ENCODE measurements at regions of chr20 and their contacts with region 1.

Region 1: DNA sequence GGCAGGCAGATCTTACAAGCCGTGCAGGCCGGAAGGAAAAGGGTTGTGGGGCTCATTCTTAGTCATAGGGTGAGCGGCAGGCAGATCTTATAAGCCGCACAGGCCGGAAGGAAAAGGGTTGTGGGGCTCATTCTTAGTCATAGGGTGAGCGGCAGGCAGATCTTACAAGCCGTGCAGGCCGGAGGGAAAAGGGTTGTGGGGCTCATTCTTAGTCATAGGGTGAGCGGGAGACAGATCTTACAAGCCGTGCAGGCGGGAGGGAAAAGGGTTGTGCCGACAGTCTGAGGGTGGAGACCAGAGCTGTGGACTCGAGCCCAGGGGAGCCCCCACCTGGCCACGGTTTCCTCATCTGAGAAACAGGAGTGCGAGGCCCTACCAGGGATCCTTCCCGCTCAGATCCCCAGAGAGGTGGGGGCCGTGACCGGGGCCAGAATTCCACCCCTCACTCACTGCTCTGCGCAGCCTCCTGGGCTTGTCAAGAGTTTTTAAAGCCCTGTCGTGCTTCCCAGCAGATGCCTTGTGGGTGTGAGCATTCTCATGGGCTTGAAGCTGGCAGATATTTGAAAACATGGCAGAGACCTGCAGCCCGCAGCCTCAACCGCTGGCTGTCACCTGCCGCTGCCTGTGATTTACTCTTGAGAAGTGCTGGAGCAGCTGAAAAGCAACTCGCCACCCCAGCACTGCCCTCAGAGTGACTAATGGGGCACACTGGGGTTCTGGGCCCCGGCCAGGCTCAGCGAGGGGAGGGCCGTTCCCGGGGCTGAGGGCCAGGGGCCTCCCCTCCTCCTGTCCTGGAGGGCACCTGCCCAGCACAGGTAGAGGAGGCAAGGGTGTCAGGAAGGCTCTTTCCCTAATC is 31.9 kb downstream of the NTSR1 start:
- DNase-seq: peak; percentile 44 to 78 (median 68)
- ATAC-seq: peak; percentile 87
- H3K4me3 ChIP-seq: peak overlapping the region; percentile 70
- H3K4me3 Mint-ChIP-seq: peak overlapping the region; percentile 70 to 91 (median 82)
- H3K27ac ChIP-seq: peak overlapping the region; percentile 60
- H3K27ac Mint-ChIP-seq: peak overlapping the region; percentile 75 to 97 (median 86)
- H3K4me1 ChIP-seq: peaks cover 38 to 50% of the 10 kb centered on the region in 2 donors
- H3K4me1 Mint-ChIP-seq: peaks cover 16 to 43% (median 29%) of the 10 kb centered on the region in 7 donors
- H3K27me3 ChIP-seq: no peaks in the 10 kb centered on the region
- H3K27me3 Mint-ChIP-seq: peaks cover 0 to 21% (median 0%) of the 10 kb centered on the region in 5 donors

Region 2: DNA sequence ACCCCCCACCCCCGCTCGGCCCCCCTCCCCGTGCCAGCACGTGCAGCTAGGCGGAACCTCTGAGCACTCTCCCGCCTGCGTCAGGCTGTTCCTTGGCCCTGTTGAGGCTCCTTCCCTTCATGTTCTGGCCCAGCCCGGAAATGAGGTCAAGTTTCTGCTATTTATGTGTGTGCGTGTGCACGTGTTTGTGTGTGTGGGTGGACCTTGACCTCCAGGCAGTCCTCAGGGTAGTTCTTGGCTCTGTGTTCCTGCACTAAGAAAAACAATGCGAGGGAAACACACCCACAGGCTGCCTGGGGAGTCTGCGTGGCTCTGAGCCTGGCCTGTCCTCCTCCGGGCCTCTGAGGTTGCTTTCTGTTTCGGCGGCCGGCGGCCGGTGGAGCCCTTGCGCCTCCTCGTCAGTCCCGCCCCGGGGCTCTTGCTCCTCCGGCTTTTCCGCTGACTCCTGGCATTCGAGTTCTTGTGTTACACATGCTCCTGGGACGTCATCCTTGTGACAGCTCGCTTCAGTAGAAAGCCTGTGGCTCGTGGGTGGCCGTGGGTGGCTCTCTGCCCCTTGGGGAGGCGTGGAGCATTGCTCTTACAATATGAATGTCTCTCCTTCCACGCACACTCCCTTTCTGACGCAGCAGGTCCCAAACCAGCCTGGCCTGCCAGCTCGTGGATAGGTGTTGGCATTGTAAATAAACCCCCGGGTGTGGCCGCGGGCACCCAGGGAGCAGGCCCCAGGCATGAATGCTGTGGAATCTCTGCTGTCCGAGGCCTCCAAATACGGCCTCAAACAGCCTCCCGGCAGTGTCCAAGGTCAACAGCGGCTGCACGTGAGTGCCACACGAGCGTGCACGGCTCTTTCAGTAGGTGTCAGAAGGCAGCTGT is 88.2 kb before region 1 on chr20:
- CTCF ChIA-PET with region 1: no interaction called
- POLR2A ChIA-PET with region 1: interaction called, 7 read pairs
- intact Hi-C with region 1: loop called in 1 of 2 experiments (anchors 1 kb)
- DNase-seq: peak; percentile 44 to 80 (median 75)
- ATAC-seq: peak; percentile 78
- H3K4me3 ChIP-seq: peak overlapping the region; percentile 40
- H3K4me3 Mint-ChIP-seq: peak overlapping the region; percentile 80 to 95 (median 84)
- H3K27ac ChIP-seq: peak overlapping the region; percentile 81
- H3K27ac Mint-ChIP-seq: peak overlapping the region; percentile 93 to 99 (median 97)
- H3K4me1 ChIP-seq: peaks cover 17 to 20% of the 10 kb centered on the region in 2 donors
- H3K4me1 Mint-ChIP-seq: peaks cover 11 to 45% (median 30%) of the 10 kb centered on the region in 7 donors
- H3K27me3 ChIP-seq: no peaks in the 10 kb centered on the region
- H3K27me3 Mint-ChIP-seq: no peaks in the 10 kb centered on the region

Region 3: DNA sequence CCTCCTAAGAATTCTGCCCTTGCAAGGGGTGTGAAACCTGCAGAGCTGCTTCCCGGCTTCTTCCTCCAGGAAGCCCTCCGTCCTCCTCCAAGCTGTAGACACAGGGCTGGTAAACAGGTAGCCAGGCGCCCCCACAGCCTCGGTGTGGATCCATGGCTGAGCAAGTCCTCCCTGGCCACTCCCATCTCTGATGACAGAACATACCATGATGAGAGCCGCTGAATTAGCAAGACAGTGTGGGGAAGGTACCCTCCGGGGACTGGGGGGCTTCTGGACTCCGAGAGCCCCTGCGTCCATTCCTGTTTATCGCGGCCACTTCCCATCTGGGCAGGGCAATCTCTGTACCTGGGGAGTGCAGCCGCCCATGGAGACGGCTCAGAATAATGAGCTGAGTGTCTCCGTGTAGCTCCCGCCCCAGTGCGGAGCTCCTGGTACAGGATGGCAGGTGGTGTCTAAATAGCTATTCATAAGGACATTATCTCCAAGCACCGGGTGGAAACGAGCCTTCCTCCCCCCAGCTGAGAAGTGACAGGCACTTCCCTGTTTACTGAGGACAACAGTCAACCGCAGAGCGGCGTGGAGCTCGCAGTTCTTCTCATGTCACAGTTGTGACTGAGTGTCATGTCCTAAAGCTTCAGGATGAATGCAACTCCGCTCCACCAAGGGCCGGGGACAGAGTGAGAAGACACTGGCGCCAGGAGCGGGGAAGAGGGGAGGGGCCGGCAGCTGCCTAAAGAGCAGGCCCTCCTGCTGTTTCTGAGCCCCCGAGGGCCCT is 54.5 kb before region 1 on chr20:
- CTCF ChIA-PET with region 1: no interaction called
- POLR2A ChIA-PET with region 1: interaction called, 3 read pairs
- intact Hi-C with region 1: loop called in 1 of 2 experiments (anchors 2 kb)
- DNase-seq: peak in 5 of 9 donors; percentile 14 to 36 (median 23)
- ATAC-seq: peak; percentile 90
- H3K4me3 ChIP-seq: no peak overlapping the region
- H3K4me3 Mint-ChIP-seq: peak overlapping the region in 9 of 10 donors; percentile 20 to 76 (median 42)
- H3K27ac ChIP-seq: no peak overlapping the region
- H3K27ac Mint-ChIP-seq: peak overlapping the region in 1 of 9 donors; percentile 60
- H3K4me1 ChIP-seq: no peaks in the 10 kb centered on the region
- H3K4me1 Mint-ChIP-seq: peaks cover 6 to 17% (median 12%) of the 10 kb centered on the region in 7 donors
- H3K27me3 ChIP-seq: no peaks in the 10 kb centered on the region
- H3K27me3 Mint-ChIP-seq: peaks cover 0 to 16% (median 10%) of the 10 kb centered on the region in 5 donors

Region 4: DNA sequence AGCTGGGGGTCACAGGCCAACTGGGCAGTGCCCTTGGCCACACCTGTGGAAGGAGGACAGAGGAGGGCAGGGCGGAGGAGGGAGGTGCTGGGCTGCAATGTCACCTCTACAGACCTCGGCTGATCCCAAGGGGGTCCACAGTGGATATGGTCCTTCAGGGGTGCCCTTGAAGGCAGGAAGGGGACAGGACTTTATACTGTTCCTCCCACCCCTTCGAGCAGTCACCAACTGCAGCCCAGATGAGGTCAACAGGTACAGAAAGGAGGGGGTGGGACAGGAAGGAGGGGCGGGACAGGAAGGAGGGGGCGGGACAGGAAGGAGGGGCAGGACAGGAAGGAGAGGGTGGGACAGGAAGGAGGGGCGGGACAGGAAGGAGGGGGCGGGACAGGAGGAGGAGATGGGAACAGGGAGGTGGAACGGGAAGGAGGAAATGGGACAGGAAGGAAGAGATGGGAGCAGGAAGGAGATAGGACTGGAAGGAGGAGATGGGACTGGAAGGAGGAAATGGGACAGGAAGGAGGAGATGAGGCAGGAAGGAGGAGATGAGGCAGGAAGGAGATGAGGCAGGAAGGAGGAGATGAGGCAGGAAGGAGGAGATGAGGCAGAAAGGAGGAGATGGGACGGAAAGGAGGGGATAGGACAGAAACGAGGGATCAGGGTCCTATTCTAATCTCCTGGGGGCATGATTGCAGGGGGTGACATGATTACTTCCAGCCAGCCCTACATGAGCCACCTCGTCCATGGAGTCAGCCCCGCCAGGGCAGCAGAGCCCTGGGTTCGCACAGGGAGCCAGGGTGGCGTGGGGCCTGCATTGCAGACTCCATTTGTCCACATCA is 36.4 kb after region 1 on chr20:
- CTCF ChIA-PET with region 1: interaction called, 3 read pairs
- POLR2A ChIA-PET with region 1: interaction called, 5 read pairs
- intact Hi-C with region 1: loop called (anchors 1 kb)
- DNase-seq: peak in 7 of 9 donors; percentile 35 to 70 (median 57)
- ATAC-seq: peak; percentile 78
- H3K4me3 ChIP-seq: peak overlapping the region; percentile 49
- H3K4me3 Mint-ChIP-seq: peak overlapping the region; percentile 51 to 91 (median 66)
- H3K27ac ChIP-seq: peak overlapping the region; percentile 77
- H3K27ac Mint-ChIP-seq: peak overlapping the region; percentile 90 to 95 (median 93)
- H3K4me1 ChIP-seq: peaks cover 24 to 49% of the 10 kb centered on the region in 2 donors
- H3K4me1 Mint-ChIP-seq: peaks cover 35 to 65% (median 58%) of the 10 kb centered on the region in 7 donors
- H3K27me3 ChIP-seq: no peaks in the 10 kb centered on the region
- H3K27me3 Mint-ChIP-seq: no peaks in the 10 kb centered on the region

Measured in naive thymus-derived CD4-positive, alpha-beta T cell (primary cell).